ENCODE measurements at regions of chr3 and their contacts with region 1.

Region 1: DNA sequence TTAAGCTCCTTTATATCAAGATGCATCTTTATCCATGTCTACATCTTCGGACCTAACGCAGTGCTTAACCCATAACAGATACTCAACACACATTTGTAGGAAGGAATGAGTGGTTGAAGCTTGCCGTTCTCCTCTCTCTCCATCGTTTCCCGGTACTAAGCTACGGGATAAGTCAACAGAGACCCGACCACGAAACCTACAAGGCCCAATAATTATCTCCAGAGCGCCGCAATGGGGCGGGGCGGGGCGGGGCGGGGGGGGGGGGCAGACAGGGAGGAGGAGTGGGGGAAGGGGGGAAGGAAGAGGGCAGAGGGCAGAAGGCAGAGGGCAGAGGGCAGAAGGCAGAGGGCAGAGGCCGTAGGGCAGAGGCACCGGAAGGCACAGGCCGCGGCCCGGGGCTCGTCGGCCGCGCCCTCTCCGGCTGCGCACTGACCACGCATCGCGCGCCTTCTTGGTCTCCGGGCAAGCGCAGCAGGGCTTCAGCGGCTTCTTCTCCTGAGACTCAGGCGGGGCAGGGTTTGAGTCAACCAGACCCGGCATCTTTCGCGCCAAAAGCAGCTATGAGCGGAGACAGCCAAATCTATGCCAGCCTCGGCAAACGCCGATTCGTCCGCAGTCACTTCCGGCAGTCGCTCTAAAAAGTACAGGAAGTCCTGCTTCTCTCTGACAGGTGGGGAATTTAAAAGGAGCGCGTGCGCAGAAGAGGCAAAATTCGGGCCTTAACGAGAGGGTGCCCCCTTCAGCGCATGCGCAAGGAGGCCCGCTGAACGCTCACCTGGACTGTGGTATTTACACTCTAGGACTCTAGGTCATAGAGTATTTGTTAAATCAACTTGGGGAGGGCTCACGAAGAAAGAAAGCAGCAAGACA is at the start of gene COX17:
- DNase-seq: peak; percentile 87
- ATAC-seq: peak; percentile 83
- H3K4me3 Mint-ChIP-seq: peak within 1 kb of the TSS; percentile 96
- H3K27ac Mint-ChIP-seq: peak within 1 kb of the TSS; percentile 98
- H3K4me1 Mint-ChIP-seq: peaks cover 28% of the 10 kb centered on the region
- H3K27me3 Mint-ChIP-seq: no peaks in the 10 kb centered on the region
- CTCF ChIP-seq: no peak
- total RNA-seq, gene COX17: 58.8 and 58.9 TPM in 2 replicates

Region 2: DNA sequence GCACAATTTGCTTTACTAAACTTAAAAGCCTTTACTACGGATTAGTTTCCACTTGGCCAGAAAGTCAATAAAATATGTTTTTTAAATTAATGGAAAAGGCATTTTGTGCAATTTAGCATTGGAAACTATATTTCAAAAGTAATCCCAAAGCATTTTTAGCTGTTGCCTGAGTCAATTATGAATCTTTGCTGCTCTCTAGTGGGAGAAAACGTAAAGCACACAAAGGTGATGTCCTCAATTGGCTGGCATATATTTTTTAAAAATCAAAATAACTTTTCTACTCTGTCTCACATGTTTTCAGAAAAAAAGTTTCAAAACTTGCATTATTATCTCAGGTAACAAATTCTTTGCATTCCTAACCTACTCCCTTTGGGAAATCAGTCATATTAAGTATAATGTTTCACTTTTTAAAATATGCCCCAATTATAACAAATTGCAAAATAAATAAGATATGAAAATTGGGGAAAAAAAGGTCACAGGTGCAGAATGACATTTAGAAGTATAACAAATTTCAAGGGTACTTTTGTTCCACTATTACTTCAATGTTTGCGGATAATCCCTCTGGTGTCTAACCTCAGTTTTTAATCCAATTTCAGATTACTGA is 578.3 kb before region 1 on chr3:
- CTCF ChIA-PET with region 1: no interaction called
- POLR2A ChIA-PET with region 1: no interaction called
- intact Hi-C with region 1: loop called (anchors 1 kb)
- DNase-seq: no peak
- ATAC-seq: no peak
- H3K4me3 Mint-ChIP-seq: no peak overlapping the region
- H3K27ac Mint-ChIP-seq: no peak overlapping the region
- H3K4me1 Mint-ChIP-seq: no peaks in the 10 kb centered on the region
- H3K27me3 Mint-ChIP-seq: peaks cover 2% of the 10 kb centered on the region
- CTCF ChIP-seq: no peak

Region 3: DNA sequence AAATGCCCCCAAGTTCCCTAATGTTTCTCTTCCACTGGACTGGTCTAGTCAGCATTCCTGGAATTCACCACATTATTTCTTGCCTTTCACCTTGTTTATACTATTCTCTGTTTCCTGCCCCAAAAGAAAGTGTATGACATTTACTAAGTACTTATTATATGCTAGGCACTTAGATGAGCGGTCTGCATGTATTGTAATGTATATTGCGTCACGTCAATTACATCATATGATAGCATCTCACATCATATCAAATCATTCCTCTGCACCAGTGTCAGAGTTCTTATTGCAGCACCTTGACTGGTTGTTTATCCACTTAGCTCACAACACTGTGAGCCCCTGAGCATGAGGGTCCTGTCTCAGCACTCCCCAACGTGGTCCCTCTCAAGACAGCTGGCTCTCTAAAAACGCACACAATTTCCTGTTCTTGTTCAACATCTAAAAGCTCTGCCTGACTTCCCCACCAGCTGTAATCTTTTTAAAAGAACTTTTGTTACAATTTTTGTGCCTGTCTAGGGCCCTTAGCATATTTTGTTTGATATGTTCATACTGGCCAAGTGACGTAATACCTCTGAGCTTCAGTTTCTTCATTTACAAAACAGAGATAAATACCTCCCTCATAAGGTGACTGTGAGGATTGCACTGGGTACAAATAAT is 324.0 kb before region 1 on chr3:
- CTCF ChIA-PET with region 1: interaction called, 5 read pairs
- POLR2A ChIA-PET with region 1: interaction called, 4 read pairs
- intact Hi-C with region 1: loop called (anchors 2 kb)
- DNase-seq: no peak
- ATAC-seq: peak; percentile 46
- H3K4me3 Mint-ChIP-seq: peak overlapping the region; percentile 41
- H3K27ac Mint-ChIP-seq: peak overlapping the region; percentile 47
- H3K4me1 Mint-ChIP-seq: peaks cover 47% of the 10 kb centered on the region
- H3K27me3 Mint-ChIP-seq: no peaks in the 10 kb centered on the region
- CTCF ChIP-seq: no peak

Region 4: DNA sequence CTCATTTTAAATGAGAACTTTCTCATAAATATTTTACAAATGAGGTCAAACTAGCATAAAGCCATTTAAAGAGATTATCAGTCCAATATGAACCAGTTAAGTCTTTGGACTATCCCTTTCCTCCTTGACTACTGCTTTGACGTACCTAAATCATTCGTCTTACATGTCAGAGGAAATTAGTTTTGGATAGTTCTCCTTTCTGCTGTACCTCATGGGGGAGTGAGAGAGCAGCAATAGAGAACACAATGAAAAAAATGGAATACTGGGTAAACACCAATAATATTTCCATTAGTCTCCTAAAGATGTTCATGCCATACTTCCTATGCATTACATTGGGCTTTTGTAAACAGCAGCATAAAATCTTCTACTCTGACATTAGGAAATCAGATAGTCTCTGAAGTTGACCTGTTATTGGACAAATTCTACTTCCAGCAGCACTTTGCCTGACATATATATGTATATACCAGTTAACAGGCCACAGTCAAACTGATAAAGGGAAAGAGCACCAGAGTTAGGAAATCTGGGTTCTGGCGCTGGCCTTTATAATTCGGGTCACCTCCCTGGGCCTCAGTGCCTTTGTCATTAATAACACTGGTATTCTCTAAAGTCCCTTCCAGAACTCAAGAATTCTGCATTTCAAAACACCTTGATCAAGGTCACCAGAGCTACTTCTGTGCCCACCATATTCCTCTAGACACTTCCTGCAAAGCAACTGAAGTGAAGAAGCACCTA is 151.9 kb before region 1 on chr3:
- CTCF ChIA-PET with region 1: interaction called, 10 read pairs
- POLR2A ChIA-PET with region 1: interaction called, 3 read pairs
- intact Hi-C with region 1: loop called (anchors 1 kb)
- DNase-seq: no peak
- ATAC-seq: no peak
- H3K4me3 Mint-ChIP-seq: no peak overlapping the region
- H3K27ac Mint-ChIP-seq: peak overlapping the region; percentile 15
- H3K4me1 Mint-ChIP-seq: peaks cover 10% of the 10 kb centered on the region
- H3K27me3 Mint-ChIP-seq: no peaks in the 10 kb centered on the region
- CTCF ChIP-seq: no peak

Region 5: DNA sequence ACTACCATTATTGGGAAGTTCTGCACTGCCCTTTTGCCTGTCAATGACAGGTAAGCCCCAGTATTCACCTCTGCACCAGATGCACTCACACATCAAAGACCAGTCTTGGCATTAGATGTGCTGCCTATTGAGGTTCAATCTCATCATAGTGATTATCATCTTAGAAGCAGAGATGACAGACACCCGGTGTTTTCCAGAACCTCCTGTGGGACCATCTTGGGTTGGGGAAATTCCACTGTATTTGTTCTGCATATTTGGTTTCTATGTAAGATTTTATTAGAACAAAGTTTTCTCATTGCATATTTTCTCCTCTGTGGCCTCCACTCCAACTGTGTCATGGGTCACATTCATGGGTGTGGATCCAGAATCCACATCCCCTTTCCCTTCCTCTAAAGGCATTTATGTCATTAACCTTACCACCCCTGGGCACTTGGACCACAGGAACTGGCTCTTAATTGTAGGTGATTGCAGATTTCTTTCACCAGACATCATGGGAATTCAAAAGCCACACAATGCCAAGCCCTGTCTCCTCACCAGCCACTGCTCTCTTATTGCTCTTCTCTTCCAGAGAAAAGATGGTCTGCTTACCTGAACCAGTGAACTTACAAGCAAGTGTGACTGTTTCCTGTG is 48.1 kb before region 1 on chr3:
- CTCF ChIA-PET with region 1: interaction called, 3 read pairs
- POLR2A ChIA-PET with region 1: interaction called, 17 read pairs
- intact Hi-C with region 1: loop called (anchors 1 kb)
- DNase-seq: peak; percentile 24
- ATAC-seq: peak; percentile 69
- H3K4me3 Mint-ChIP-seq: peak overlapping the region; percentile 73
- H3K27ac Mint-ChIP-seq: peak overlapping the region; percentile 97
- H3K4me1 Mint-ChIP-seq: peaks cover 70% of the 10 kb centered on the region
- H3K27me3 Mint-ChIP-seq: no peaks in the 10 kb centered on the region
- CTCF ChIP-seq: no peak

Region 6: GRCh38 chr3:119702530-119703157 is 25.6 kb after region 1 on chr3 and contains the start of gene CFAP91:
- CTCF ChIA-PET with region 1: interaction called, 6 read pairs
- POLR2A ChIA-PET with region 1: interaction called, 9 read pairs
- intact Hi-C with region 1: loop called (anchors 1 kb)
- DNase-seq: peak; percentile 86
- ATAC-seq: peak; percentile 92
- H3K4me3 Mint-ChIP-seq: peak within 1 kb of the TSS; percentile 86
- H3K27ac Mint-ChIP-seq: peak within 1 kb of the TSS; percentile 72
- H3K4me1 Mint-ChIP-seq: peaks cover 52% of the 10 kb centered on the region
- H3K27me3 Mint-ChIP-seq: no peaks in the 10 kb centered on the region
- CTCF ChIP-seq: no peak
- total RNA-seq, gene CFAP91: 8.5 and 12.9 TPM in 2 replicates

Region 7: GRCh38 chr3:119885746-119886530 is 208.9 kb after region 1 on chr3:
- CTCF ChIA-PET with region 1: no interaction called
- POLR2A ChIA-PET with region 1: no interaction called
- intact Hi-C with region 1: no loop called
- DNase-seq: no peak
- ATAC-seq: no peak
- H3K4me3 Mint-ChIP-seq: no peak overlapping the region
- H3K27ac Mint-ChIP-seq: no peak overlapping the region
- H3K4me1 Mint-ChIP-seq: no peaks in the 10 kb centered on the region
- H3K27me3 Mint-ChIP-seq: no peaks in the 10 kb centered on the region
- CTCF ChIP-seq: no peak

Region 8: DNA sequence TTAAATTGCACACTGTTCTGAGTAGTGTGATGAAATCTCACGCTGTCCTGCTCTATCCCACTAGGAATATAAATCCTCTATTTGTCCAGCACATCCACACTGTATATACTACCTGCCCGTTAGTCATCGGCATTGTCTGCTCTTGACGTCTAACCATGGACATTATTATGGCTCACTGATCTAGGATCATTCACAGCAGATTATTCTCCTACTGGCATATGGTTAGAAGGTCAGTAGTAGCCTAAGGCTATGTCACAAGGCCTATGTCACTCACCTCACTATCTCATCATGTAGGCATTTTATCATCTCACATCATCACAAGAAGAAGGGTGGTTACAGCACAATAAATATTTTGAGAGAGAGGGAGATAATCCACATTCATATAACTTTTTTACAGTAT is 296.3 kb after region 1 on chr3:
- CTCF ChIA-PET with region 1: no interaction called
- POLR2A ChIA-PET with region 1: no interaction called
- intact Hi-C with region 1: no loop called
- DNase-seq: no peak
- ATAC-seq: no peak
- H3K4me3 Mint-ChIP-seq: no peak overlapping the region
- H3K27ac Mint-ChIP-seq: no peak overlapping the region
- H3K4me1 Mint-ChIP-seq: peaks cover 3% of the 10 kb centered on the region
- H3K27me3 Mint-ChIP-seq: no peaks in the 10 kb centered on the region
- CTCF ChIP-seq: no peak

Region 9: DNA sequence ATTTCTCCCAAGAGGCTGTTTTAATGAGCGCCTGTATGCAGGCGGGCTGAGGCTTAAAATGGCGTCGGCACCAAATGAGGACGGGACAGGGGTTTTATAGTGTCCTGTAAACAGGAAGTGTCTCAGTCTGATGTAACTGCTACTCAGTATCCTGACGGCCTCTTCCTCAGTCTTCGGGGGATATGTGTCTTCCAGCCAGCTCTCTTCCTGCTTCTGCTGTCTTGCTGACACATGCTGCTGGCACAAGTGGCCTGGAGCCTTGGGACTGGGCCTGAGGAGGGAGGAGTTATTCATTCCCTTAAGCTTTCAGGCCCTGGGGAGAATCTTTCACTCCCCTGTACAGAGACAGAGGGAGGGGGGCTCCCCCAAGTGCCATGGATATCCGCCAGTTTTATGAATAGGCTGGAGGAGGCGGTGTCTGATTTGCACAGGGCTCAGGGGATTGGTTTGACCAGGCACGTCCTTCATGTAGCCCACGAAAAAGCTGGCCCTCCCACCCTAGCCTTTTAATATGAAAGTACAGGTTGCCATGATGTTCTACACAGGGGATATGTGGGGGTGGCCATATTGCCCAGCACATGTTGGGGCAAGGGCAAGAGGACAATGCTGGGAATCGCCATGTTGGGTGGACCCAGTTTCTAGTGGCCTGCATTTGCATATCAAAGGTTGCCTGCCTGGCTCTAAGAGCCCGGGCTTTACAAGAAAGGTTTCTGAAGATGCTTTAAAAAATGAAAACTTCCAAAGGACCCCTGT is 939.0 kb after region 1 on chr3:
- CTCF ChIA-PET with region 1: no interaction called
- POLR2A ChIA-PET with region 1: no interaction called
- intact Hi-C with region 1: no loop called
- DNase-seq: no peak
- ATAC-seq: no peak
- H3K4me3 Mint-ChIP-seq: no peak overlapping the region
- H3K27ac Mint-ChIP-seq: no peak overlapping the region
- H3K4me1 Mint-ChIP-seq: no peaks in the 10 kb centered on the region
- H3K27me3 Mint-ChIP-seq: peaks cover 8% of the 10 kb centered on the region
- CTCF ChIP-seq: no peak